A673 (cell line): ENCODE measurements at regions of chr3 and their contacts with region 1.

Region 1: DNA sequence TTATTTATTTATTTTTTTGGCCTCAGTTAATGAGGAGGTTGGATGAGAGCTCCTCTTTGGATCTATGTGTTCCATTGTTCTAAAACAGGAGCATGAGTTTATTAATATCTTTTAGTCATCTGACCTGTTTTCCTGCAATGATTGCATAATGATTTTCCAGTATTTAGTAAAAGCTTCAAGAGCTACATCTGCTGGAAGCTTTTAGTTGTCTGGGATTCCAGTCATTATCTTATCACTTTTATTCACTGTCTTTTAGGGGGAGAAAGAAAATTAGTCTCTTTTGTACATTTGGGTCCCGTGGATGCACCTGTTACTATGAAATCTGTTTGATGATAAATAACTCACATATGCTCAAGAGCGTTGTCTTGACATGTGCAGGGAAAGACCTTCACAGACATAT is 1270.0 kb downstream of the ROBO1 start:
- DNase-seq: no peak
- H3K4me3 ChIP-seq: no peak overlapping the region
- H3K27ac ChIP-seq: no peak overlapping the region
- H3K4me1 ChIP-seq: peaks cover 23% of the 10 kb centered on the region
- H3K27me3 ChIP-seq: no peaks in the 10 kb centered on the region
- CTCF ChIP-seq: peak; percentile 32; the same call in 1 of the 2 replicates

Region 2: DNA sequence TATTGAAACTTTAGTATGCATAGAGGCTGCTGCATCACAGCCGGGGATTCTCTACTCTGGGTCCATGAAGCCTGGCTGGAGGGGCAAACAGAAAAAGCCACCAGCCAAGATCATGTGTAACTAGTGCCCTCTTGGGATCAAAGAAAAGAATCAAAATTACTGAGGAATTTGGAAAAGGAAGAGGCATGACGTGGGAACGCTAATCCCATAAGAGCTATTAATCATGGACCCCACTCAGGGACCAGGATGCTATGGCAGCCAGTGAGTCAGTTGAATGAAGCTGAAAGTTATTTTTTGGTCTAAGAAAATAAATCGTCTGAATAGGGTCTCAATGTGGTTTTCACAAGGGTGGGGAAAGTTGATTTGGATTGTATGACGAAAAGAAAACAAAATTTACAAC is 292.8 kb before region 1 on chr3:
- CTCF ChIA-PET with region 1: no interaction called
- POLR2A ChIA-PET with region 1: no interaction called
- intact Hi-C with region 1: loop called (anchors 5 kb)
- DNase-seq: peak; percentile 85
- H3K4me3 ChIP-seq: no peak overlapping the region
- H3K27ac ChIP-seq: no peak overlapping the region
- H3K4me1 ChIP-seq: peaks cover 5% of the 10 kb centered on the region
- H3K27me3 ChIP-seq: no peaks in the 10 kb centered on the region
- CTCF ChIP-seq: peak; percentile 44; the same call in 1 of the 2 replicates

Region 3: GRCh38 chr3:78277801-78278200 is 220.0 kb before region 1 on chr3:
- CTCF ChIA-PET with region 1: no interaction called
- POLR2A ChIA-PET with region 1: no interaction called
- intact Hi-C with region 1: loop called (anchors 5 kb)
- DNase-seq: no peak
- H3K4me3 ChIP-seq: no peak overlapping the region
- H3K27ac ChIP-seq: no peak overlapping the region
- H3K4me1 ChIP-seq: peaks cover 26% of the 10 kb centered on the region
- H3K27me3 ChIP-seq: no peaks in the 10 kb centered on the region
- CTCF ChIP-seq: no peak

Region 4: DNA sequence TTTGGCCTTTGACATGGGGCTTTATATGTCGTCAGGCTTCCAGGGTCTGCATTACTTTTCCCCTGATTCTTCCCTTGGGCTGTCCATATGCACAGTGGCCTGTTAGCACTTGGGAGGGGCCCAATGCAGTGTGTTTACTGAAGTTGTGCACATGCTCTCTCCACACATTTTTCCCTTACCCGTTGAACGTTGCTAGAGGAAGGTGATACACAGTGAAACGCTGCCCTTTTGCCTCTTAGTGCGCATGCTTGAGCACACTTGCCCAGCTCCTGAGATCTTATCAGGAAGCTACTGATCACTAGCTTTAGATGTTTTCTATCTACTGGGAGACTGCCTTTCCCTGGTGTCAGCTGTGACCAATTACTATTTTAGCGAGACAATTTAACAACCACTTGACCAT is 72.0 kb after region 1 on chr3:
- CTCF ChIA-PET with region 1: no interaction called
- POLR2A ChIA-PET with region 1: no interaction called
- intact Hi-C with region 1: no loop called
- DNase-seq: no peak
- H3K4me3 ChIP-seq: no peak overlapping the region
- H3K27ac ChIP-seq: no peak overlapping the region
- H3K4me1 ChIP-seq: peaks cover 9% of the 10 kb centered on the region
- H3K27me3 ChIP-seq: no peaks in the 10 kb centered on the region
- CTCF ChIP-seq: no peak

Region 5: GRCh38 chr3:78697426-78697825 is 199.7 kb after region 1 on chr3:
- CTCF ChIA-PET with region 1: no interaction called
- POLR2A ChIA-PET with region 1: no interaction called
- intact Hi-C with region 1: no loop called
- DNase-seq: peak; percentile 35
- H3K4me3 ChIP-seq: no peak overlapping the region
- H3K27ac ChIP-seq: no peak overlapping the region
- H3K4me1 ChIP-seq: peaks cover 30% of the 10 kb centered on the region
- H3K27me3 ChIP-seq: no peaks in the 10 kb centered on the region
- CTCF ChIP-seq: no peak